Transverse colon (tissue), 4 donors: ENCODE measurements at regions of chr13 and their contacts with region 1.

Region 1: DNA sequence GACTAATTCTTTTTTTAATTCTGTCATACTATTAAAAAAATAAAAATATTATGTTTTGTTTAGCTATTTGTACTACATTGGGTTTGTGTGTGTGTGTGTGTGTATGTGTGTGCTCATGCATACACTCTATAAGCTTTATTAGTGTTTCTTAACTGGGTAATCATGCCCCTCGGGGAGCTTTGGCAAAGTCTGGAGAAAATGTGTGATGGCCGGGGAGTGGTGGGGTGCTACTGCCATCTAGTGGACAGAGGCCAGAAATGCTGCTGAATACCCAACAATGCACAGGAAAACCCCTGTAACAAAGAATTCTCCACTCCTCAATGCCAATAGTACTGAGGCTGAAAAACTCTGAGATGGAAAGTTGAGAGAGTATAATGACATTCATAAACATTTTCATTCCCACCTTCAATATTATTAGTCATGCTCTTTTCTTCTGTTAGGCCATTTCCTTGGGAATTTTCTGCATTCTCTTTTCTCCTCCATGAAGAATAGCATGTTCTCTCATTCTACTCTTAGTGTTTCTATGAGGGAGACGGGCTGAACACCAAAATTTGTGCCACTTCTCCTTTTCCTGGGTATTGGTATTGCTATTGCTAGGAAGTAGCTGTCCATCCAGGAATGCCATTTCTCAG is 157.3 kb downstream of the DNAJC3 start:
- DNase-seq: peak; percentile 64
- H3K4me3 ChIP-seq: no peak overlapping the region
- H3K27ac ChIP-seq: no peak overlapping the region
- H3K4me1 ChIP-seq: peaks cover 0 to 7% (median 4%) of the 10 kb centered on the region in 4 donors
- H3K27me3 ChIP-seq: no peaks in the 10 kb centered on the region
- CTCF ChIP-seq: peak; percentile 89 to 92 (median 90)
- EP300 ChIP-seq: no peak
- POLR2A ChIP-seq: no peak

Region 2: DNA sequence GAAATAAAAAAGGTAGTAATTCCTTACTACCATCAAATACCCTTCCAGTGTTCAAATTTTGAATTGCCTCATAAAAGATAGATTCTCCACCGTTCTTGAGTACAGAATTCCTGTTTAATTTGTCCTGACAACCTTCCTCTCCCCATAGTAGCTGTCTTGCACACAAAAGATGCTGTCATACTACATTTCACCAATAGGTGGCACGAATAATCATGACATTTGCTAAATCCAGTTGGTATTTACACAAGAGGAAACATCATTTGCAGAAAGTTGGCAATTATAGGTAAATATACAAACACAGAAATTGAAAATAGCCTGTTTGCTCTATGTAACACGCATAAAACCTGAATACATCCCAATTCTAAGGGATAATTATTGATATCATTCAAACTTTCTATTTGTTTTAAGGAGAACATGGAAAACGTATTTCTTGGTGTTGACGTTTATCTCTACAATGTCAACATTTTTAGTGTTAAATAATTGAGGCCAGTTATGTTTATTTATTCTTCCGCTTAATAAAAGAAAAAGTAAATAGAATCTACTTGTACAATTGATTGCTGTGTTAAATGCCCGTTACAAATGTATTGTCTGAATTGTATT is 340.1 kb before region 1 on chr13:
- in situ Hi-C with region 1: no loop called
- intact Hi-C with region 1: loop called (anchors 5 kb)
- DNase-seq: no peak
- H3K4me3 ChIP-seq: no peak overlapping the region
- H3K27ac ChIP-seq: no peak overlapping the region
- H3K4me1 ChIP-seq: peaks cover 0 to 16% (median 3%) of the 10 kb centered on the region in 4 donors
- H3K27me3 ChIP-seq: no peaks in the 10 kb centered on the region
- CTCF ChIP-seq: peak; percentile 62 to 70 (median 64)
- EP300 ChIP-seq: no peak
- POLR2A ChIP-seq: no peak

Region 3: DNA sequence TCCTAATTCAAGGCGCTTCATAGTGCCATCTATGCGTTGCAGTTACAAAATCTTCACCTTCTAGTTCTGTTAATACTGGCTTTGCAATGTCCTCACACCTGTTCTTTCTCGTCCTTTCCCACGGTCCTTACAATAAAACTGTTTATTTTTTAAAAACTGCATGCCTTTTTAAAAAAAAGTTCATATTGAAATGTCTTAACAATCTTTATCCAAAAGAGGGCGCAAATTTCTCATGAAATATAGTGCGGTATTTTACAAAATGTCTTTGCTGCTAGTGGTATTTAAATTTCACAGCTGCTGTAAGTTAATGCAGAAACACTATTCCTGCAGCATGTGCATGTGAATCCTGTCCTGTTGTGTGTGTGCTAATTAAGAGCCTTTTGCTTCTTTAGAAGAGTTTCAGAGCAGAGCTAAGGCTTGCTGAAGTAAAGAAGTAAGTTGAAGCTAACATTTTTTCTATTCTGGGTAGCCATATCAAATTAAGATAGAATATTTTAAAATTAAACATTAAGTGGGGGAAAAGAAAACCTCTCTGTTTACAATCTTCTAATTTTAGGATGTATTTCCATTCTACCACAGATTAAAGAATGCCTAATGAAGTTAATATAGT is 297.5 kb before region 1 on chr13:
- in situ Hi-C with region 1: loop called in 2 of 4 experiments (anchors 10 to 25 kb)
- intact Hi-C with region 1: no loop called
- DNase-seq: no peak
- H3K4me3 ChIP-seq: no peak overlapping the region
- H3K27ac ChIP-seq: no peak overlapping the region
- H3K4me1 ChIP-seq: peaks cover 0 to 12% (median 5%) of the 10 kb centered on the region in 4 donors
- H3K27me3 ChIP-seq: peaks cover 4% of the 10 kb centered on the region
- CTCF ChIP-seq: peak in 4 of 5 experiments; percentile 23 to 37 (median 34)
- EP300 ChIP-seq: no peak
- POLR2A ChIP-seq: no peak

Region 4: GRCh38 chr13:95614641-95615245 is 219.5 kb before region 1 on chr13:
- in situ Hi-C with region 1: loop called in 2 of 4 experiments (anchors 10 to 25 kb)
- intact Hi-C with region 1: no loop called
- DNase-seq: no peak
- H3K4me3 ChIP-seq: no peak overlapping the region
- H3K27ac ChIP-seq: no peak overlapping the region
- H3K4me1 ChIP-seq: no peaks in the 10 kb centered on the region
- H3K27me3 ChIP-seq: no peaks in the 10 kb centered on the region
- CTCF ChIP-seq: no peak
- EP300 ChIP-seq: no peak
- POLR2A ChIP-seq: no peak

Region 5: GRCh38 chr13:95624020-95624419 is 210.2 kb before region 1 on chr13:
- in situ Hi-C with region 1: loop called in 3 of 4 experiments (anchors 10 to 25 kb)
- intact Hi-C with region 1: loop called (anchors 2 kb)
- DNase-seq: no peak
- H3K4me3 ChIP-seq: no peak overlapping the region
- H3K27ac ChIP-seq: no peak overlapping the region
- H3K4me1 ChIP-seq: peaks cover 0 to 18% (median 6%) of the 10 kb centered on the region in 4 donors
- H3K27me3 ChIP-seq: no peaks in the 10 kb centered on the region
- CTCF ChIP-seq: peak; percentile 51 to 64 (median 61)
- EP300 ChIP-seq: no peak
- POLR2A ChIP-seq: no peak

Region 6: GRCh38 chr13:95636853-95637252 is 197.4 kb before region 1 on chr13:
- in situ Hi-C with region 1: loop called in 1 of 4 experiments (anchors 10 kb)
- intact Hi-C with region 1: no loop called
- DNase-seq: no peak
- H3K4me3 ChIP-seq: no peak overlapping the region
- H3K27ac ChIP-seq: no peak overlapping the region
- H3K4me1 ChIP-seq: peaks cover 0 to 5% (median 2%) of the 10 kb centered on the region in 4 donors
- H3K27me3 ChIP-seq: peaks cover 22% of the 10 kb centered on the region
- CTCF ChIP-seq: no peak
- EP300 ChIP-seq: no peak
- POLR2A ChIP-seq: no peak

Region 7: GRCh38 chr13:96172066-96172465 is 337.8 kb after region 1 on chr13:
- in situ Hi-C with region 1: no loop called
- intact Hi-C with region 1: no loop called
- DNase-seq: no peak
- H3K4me3 ChIP-seq: no peak overlapping the region
- H3K27ac ChIP-seq: no peak overlapping the region
- H3K4me1 ChIP-seq: no peaks in the 10 kb centered on the region
- H3K27me3 ChIP-seq: no peaks in the 10 kb centered on the region
- CTCF ChIP-seq: no peak
- EP300 ChIP-seq: no peak
- POLR2A ChIP-seq: no peak